Panc1 (cell line): ENCODE measurements at regions of chr11 and their contacts with region 1.

Region 1: GRCh38 chr11:65506770-65507505 is 8.1 kb downstream of the MALAT1 start:
- DNase-seq: peak; percentile 93
- ATAC-seq: peak; percentile 61
- H3K4me3 ChIP-seq: peak overlapping the region; percentile 78 to 99
- H3K27ac ChIP-seq: peak overlapping the region; percentile 100
- H3K4me1 ChIP-seq: peaks cover 30% of the 10 kb centered on the region
- H3K27me3 ChIP-seq: no peaks in the 10 kb centered on the region
- CTCF ChIP-seq: no peak

Region 2: DNA sequence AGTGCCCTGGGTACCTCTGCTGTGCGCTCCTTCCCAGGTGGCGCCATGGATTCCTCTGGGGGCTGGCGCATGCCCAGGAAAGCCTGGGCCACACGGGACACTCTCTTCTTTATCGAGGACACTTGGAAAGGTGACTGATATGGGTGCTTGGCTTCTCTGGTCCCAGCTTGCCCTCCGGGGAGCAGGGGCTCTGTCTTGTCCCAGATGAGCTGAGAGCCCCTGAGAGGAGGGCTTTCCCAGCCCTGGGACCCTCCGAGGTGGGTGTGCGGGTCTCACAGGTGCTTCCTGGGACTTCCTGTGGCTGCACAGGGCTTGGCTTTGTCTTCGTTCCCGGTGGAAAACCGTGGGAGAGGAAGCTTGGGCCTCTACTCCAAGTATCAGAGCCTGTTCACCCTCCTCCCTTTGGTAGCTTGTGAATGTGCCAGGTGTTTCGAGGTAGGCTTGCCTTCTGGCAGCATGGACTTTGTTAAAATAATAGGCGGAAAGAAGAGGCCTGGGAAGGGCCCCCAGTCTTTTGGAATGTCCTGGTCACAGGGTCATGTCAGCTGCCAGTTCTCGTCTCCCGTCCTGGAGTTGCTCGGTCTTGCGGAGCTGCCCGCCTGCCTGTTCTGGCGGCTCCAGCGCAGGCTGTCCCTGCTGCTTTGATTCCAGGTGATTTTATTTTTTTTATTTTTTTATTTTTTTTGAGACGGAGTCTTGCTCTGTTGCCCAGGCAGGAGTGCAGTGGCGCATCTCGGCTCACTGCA is 94.4 kb before region 1 on chr11:
- CTCF ChIA-PET with region 1: interaction called, 10 read pairs
- POLR2A ChIA-PET with region 1: interaction called, 19 read pairs
- in situ Hi-C with region 1: no loop called
- intact Hi-C with region 1: loop called (anchors 5 kb)
- DNase-seq: no peak
- ATAC-seq: no peak
- H3K4me3 ChIP-seq: no peak overlapping the region
- H3K27ac ChIP-seq: no peak overlapping the region; the same call in 1 of the 2 replicates
- H3K4me1 ChIP-seq: peaks cover 28% of the 10 kb centered on the region
- H3K27me3 ChIP-seq: no peaks in the 10 kb centered on the region
- CTCF ChIP-seq: no peak

Region 3: DNA sequence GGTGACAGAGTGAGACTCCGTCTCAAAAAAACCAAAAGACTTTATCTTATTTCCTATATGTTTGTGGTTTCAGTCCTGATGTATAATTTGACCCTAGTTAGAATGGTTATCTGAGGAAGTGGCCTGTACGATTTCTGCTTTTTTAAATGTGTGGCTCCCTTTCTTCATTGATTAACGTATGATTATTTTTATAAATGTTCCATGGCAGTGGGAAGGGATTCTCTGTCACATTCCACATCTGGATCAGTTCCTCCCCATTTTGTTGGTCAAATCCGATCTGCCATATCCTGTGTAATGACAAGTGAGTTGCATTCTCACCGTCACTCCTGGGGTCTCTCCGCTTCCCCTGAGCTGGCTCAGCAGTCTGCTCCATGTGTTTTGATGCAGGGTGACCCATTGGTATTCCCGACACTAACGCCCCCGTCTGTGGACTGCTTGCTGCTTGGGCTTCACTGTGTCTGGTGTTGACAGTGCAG is 64.0 kb before region 1 on chr11:
- CTCF ChIA-PET with region 1: no interaction called
- POLR2A ChIA-PET with region 1: interaction called, 13 read pairs
- in situ Hi-C with region 1: no loop called
- intact Hi-C with region 1: no loop called
- DNase-seq: no peak
- ATAC-seq: peak; percentile 9; the same call in 1 of the 2 replicates
- H3K4me3 ChIP-seq: no peak overlapping the region
- H3K27ac ChIP-seq: peak overlapping the region; percentile 93
- H3K4me1 ChIP-seq: peaks cover 99% of the 10 kb centered on the region
- H3K27me3 ChIP-seq: no peaks in the 10 kb centered on the region
- CTCF ChIP-seq: no peak

Region 4: DNA sequence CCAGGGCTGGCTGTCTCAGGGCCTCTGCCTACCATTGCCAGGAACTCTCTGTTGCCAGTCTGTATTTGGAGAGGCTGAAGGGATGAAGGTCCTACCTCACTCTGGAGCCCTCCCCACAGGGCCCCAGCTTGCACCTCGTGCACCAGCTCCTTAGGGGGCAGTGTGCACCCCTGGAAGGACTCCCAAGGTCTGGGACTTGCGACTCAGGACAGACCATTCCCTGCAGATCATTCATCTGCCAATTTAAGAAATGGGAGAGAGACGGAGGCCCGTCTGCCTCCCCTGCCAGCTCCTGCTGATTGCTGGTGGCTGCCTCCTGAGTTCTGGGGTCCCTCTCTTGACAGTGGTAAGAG is 35.6 kb before region 1 on chr11:
- CTCF ChIA-PET with region 1: interaction called, 4 read pairs
- POLR2A ChIA-PET with region 1: interaction called, 818 read pairs
- in situ Hi-C with region 1: no loop called
- intact Hi-C with region 1: loop called (anchors 5 kb)
- DNase-seq: no peak
- ATAC-seq: peak; percentile 78
- H3K4me3 ChIP-seq: peak overlapping the region; percentile 3 to 28; a peak in 2 of 4 replicates
- H3K27ac ChIP-seq: peak overlapping the region; percentile 100
- H3K4me1 ChIP-seq: peaks cover 60% of the 10 kb centered on the region
- H3K27me3 ChIP-seq: no peaks in the 10 kb centered on the region
- CTCF ChIP-seq: peak; percentile 88

Region 5: DNA sequence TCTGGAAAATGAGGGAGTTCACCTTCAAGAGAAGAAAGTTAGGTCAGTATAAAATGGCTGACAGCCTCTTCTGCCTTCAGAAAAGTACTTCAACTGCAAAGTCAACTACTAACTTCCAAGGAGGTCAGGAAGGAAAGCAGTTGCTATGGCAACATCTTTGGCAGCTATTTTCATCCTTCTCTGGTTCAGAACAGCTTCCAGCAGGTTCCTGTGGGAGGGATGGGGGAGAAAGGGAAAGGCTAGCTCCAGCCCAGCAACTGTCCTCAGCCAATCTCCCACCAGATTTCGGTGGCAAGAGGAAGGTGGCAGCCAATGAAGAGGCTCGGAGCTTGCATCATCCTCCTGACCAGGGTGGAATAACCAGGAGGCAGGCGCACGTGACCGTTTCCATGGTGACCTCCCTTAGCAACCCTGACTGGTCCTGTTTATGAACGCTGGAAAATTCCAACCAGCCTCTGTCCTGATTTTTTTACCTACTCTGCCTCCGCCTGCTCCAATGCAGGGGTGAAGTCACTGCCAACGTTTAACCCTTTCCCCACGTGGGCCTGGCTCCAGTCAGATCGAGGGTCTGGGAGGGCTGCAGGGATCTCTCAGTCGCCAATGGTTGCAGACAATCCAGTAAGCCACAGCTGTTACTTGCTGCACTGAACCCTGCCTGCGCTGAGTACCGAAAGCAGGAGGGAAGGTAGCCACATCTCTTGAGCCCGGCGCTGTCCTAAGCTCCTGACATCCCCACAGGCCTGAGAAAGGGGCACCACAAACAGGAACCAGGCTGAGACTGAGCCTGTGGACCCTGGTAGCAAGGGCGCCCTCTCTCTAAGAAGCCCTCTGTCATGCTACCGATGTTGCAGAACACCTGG is 19.3 kb before region 1 on chr11:
- CTCF ChIA-PET with region 1: interaction called, 5 read pairs
- POLR2A ChIA-PET with region 1: interaction called, 93 read pairs
- in situ Hi-C with region 1: no loop called
- intact Hi-C with region 1: no loop called
- DNase-seq: peak; percentile 96
- ATAC-seq: peak; percentile 82
- H3K4me3 ChIP-seq: 0 out of 4 replicates have a peak overlapping the region, but pooled peaks of 1 of the 2 experiments have one; percentile 3
- H3K27ac ChIP-seq: peak overlapping the region; percentile 100
- H3K4me1 ChIP-seq: peaks cover 87% of the 10 kb centered on the region
- H3K27me3 ChIP-seq: no peaks in the 10 kb centered on the region
- CTCF ChIP-seq: no peak

Region 6: GRCh38 chr11:65606876-65607613 is 100.1 kb after region 1 on chr11:
- CTCF ChIA-PET with region 1: no interaction called
- POLR2A ChIA-PET with region 1: interaction called, 11 read pairs
- in situ Hi-C with region 1: no loop called
- intact Hi-C with region 1: no loop called
- DNase-seq: no peak
- ATAC-seq: peak; percentile 70
- H3K4me3 ChIP-seq: no peak overlapping the region
- H3K27ac ChIP-seq: no peak overlapping the region
- H3K4me1 ChIP-seq: peaks cover 21% of the 10 kb centered on the region
- H3K27me3 ChIP-seq: no peaks in the 10 kb centered on the region
- CTCF ChIP-seq: no peak

Region 7: DNA sequence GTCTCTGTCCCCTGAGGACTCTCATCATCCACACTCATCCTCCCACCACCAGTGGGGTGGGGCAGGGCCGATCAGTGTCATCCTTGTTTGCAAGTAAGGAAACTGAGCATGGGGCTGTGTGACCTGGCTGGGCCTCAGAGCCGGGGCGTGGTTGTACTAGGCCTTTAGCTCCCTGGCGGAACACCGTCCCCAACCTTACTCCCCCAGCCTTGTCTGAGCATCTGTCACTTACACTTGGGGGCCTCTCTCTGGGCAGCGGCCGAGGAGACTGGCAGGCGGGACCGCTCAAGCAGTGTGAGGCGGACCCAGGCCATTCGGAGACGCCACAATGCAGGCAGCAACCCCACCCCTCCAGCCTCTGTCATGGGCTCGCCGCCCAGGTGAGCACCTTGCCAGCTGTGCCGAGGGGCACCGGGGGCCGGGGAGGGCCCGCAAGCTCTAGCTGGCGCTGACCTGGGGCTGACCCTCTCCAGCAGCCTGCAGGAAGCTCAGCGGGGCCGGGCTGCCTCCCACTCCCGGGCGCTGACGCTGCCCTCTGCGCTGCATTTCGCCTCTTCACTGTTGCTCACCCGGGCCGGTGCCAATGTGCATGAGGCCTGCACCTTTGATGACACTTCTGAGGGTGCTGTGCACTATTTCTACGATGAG is 112.5 kb after region 1 on chr11:
- CTCF ChIA-PET with region 1: no interaction called
- POLR2A ChIA-PET with region 1: no interaction called
- in situ Hi-C with region 1: no loop called
- intact Hi-C with region 1: no loop called
- DNase-seq: no peak
- ATAC-seq: no peak
- H3K4me3 ChIP-seq: no peak overlapping the region
- H3K27ac ChIP-seq: no peak overlapping the region
- H3K4me1 ChIP-seq: peaks cover 11% of the 10 kb centered on the region
- H3K27me3 ChIP-seq: no peaks in the 10 kb centered on the region
- CTCF ChIP-seq: no peak